Heart right ventricle (tissue), 16 donors: ENCODE measurements at regions of chr17 and their contacts with region 1.

Region 1: GRCh38 chr17:50200457-50201275 is 765 bp downstream of the COL1A1 start:
- DNase-seq: peak; percentile 88
- ATAC-seq: peak; percentile 76 to 91 (median 84)
- H3K4me3 ChIP-seq: peak overlapping the region; percentile 13 to 65 (median 60)
- H3K27ac ChIP-seq: peak overlapping the region; percentile 70 to 93 (median 84)
- H3K4me1 ChIP-seq: peaks cover 3 to 59% (median 26%) of the 10 kb centered on the region in 9 donors
- H3K27me3 ChIP-seq: peaks cover 0 to 47% (median 29%) of the 10 kb centered on the region in 7 donors
- CTCF ChIP-seq: peak; percentile 98 to 100 (median 99)

Region 2: GRCh38 chr17:50139950-50140871 is 60.5 kb before region 1 on chr17:
- intact Hi-C with region 1: no loop called
- DNase-seq: peak; percentile 81 to 82
- ATAC-seq: peak; percentile 71 to 87 (median 78)
- H3K4me3 ChIP-seq: peak overlapping the region in 3 of 10 donors; percentile 10 to 19 (median 11)
- H3K27ac ChIP-seq: peak overlapping the region; percentile 29 to 83 (median 72)
- H3K4me1 ChIP-seq: peaks cover 14 to 61% (median 43%) of the 10 kb centered on the region in 9 donors
- H3K27me3 ChIP-seq: no peaks in the 10 kb centered on the region
- CTCF ChIP-seq: peak; percentile 92 to 99 (median 97)

Region 3: DNA sequence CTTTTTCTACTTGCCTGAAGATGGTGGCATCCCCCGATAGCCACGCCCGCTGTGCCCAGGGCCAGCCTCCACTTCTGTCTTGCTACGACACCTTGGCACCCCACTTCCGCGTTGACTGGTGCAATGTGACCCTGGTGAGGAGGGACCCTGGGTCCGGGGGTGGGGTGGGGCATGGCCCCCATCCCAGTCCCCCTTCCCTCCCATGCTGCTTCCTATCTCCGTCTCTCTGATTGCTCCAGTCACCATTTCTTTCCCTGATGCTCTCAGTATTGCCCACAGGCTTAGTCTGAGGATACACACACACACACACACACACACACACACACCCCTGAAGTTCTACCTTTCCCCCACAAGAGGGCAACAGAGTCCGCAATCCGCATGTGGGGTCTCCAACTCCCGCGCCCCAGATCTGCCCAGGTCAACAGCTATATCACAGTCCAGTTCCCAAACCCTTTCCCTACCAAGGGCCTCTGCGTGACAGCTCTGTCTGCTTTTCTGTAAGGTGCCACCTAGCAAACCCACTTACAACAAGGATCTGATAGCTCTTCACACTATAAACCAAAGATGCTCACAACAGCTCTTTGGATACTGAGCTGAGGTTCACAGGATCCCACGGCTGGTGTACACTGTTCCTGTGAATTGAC is 31.4 kb before region 1 on chr17:
- intact Hi-C with region 1: loop called in 1 of 10 experiments (anchors 2 kb)
- DNase-seq: peak; percentile 24 to 57
- ATAC-seq: peak in 4 of 8 donors; percentile 1 to 30 (median 5)
- H3K4me3 ChIP-seq: no peak overlapping the region
- H3K27ac ChIP-seq: peak overlapping the region in 2 of 10 donors; percentile 35 to 94
- H3K4me1 ChIP-seq: peaks cover 5 to 83% (median 42%) of the 10 kb centered on the region in 9 donors
- H3K27me3 ChIP-seq: no peaks in the 10 kb centered on the region
- CTCF ChIP-seq: peak; percentile 23 to 69 (median 57)

Region 4: DNA sequence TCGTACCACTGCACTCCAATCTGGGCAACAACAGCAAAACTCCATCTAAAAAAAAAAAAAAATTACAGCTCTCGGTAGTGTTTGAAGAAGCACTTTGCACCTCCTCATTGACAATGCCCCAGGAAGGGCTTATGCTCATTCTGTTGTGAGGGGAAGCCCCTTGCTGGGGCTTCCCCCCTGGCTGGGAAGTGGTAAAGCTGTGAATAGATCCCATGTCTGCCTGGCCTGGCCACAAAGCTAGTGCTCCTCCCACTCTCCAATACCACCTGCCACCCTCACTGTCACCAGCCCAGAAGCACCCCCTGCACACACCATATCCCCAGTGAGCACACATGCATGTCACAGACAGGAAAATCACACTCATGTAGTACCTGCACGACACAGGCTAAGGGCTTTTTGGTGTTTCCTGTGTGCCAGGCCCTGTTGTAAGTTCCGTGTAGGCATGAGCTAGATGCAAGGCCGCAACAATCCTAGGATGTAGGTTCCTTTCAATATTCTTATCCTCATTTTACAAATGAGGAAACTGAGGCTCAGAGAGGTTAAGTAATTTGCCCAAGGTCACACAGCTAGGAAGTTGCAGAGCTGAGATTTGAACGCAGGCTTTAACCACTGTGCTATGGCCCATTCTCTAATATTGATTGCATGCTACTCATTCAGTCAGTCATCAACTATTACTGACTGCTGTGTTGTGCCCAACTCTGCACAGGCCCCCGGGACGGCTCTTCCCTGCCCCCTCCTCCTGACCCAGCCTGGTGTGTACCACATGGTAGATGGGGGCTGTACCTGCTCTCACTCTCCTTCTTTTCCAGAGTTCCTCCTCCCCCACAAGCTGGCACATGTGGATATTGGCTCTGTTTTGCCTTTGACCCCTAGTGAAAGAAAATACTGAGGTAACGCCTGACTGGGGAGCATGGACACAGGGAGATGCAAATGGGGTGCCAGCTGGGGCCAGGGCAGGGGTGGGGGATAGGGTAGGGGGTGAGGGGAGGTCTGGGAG is 12.7 kb after region 1 on chr17:
- intact Hi-C with region 1: no loop called
- DNase-seq: no peak
- ATAC-seq: no peak
- H3K4me3 ChIP-seq: no peak overlapping the region
- H3K27ac ChIP-seq: peak overlapping the region in 1 of 10 donors; percentile 62
- H3K4me1 ChIP-seq: peaks cover 3 to 61% (median 33%) of the 10 kb centered on the region in 9 donors
- H3K27me3 ChIP-seq: peaks cover 0 to 14% (median 10%) of the 10 kb centered on the region in 7 donors
- CTCF ChIP-seq: no peak

Region 5: GRCh38 chr17:50269477-50270434 is 69.1 kb after region 1 on chr17:
- intact Hi-C with region 1: loop called (anchors 1 to 5 kb)
- DNase-seq: peak; percentile 65
- ATAC-seq: peak in 7 of 8 donors; percentile 58 to 73 (median 64)
- H3K4me3 ChIP-seq: no peak overlapping the region
- H3K27ac ChIP-seq: peak overlapping the region in 6 of 10 donors; percentile 36 to 63 (median 55)
- H3K4me1 ChIP-seq: peaks cover 0 to 46% (median 14%) of the 10 kb centered on the region in 9 donors
- H3K27me3 ChIP-seq: peaks cover 0 to 18% (median 16%) of the 10 kb centered on the region in 7 donors
- CTCF ChIP-seq: peak; percentile 32 to 79 (median 70)

Region 6: DNA sequence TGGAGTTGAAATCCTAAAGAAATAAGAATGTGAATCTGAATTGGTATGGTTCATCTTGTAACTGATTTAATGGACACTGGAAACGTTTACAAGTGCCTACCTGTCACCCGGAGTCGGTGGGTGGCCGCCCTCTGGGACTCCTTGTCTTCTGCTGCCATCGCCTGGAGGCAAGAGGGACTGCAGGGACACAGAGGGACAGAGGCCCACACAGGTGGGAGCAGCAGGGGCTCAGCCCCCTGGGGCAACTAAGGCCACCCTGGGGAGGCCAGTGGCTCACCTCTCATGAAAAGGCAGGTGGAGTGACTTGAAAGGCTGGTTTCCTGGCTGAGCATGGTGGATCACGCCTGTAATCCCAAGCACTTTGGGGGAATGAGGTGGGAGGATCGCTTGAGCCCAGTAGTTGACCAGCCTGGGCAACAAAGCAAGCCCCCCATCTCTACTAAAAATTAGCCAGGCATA is 96.8 kb after region 1 on chr17:
- intact Hi-C with region 1: loop called (anchors 1 to 2 kb)
- DNase-seq: peak; percentile 71 to 77
- ATAC-seq: peak; percentile 81 to 96 (median 92)
- H3K4me3 ChIP-seq: no peak overlapping the region
- H3K27ac ChIP-seq: no peak overlapping the region
- H3K4me1 ChIP-seq: peaks cover 0 to 3% (median 0%) of the 10 kb centered on the region in 9 donors
- H3K27me3 ChIP-seq: no peaks in the 10 kb centered on the region
- CTCF ChIP-seq: peak; percentile 83 to 98 (median 95)

Region 7: GRCh38 chr17:50318501-50319285 is 118.0 kb after region 1 on chr17:
- intact Hi-C with region 1: no loop called
- DNase-seq: no peak
- ATAC-seq: no peak
- H3K4me3 ChIP-seq: no peak overlapping the region
- H3K27ac ChIP-seq: no peak overlapping the region
- H3K4me1 ChIP-seq: no peaks in the 10 kb centered on the region
- H3K27me3 ChIP-seq: peaks cover 0 to 6% (median 0%) of the 10 kb centered on the region in 7 donors
- CTCF ChIP-seq: no peak